ENCODE measurements at regions of chr12 and their contacts with region 1.

Region 1: GRCh38 chr12:132614861-132615578 is 3.6 kb upstream of the P2RX2 start:
- DNase-seq: peak; percentile 83

Region 2: GRCh38 chr12:132414634-132415326 is 200.2 kb before region 1 on chr12:
- intact Hi-C with region 1: loop called (anchors 2 kb)
- DNase-seq: peak; percentile 89

Region 3: GRCh38 chr12:132600048-132601032 is 14.7 kb before region 1 on chr12:
- intact Hi-C with region 1: loop called (anchors 1 kb)
- DNase-seq: no peak

Measured in cardiac septum (tissue), 1 donor.